Activated naive CD4-positive, alpha-beta T cell treated with anti-CD3 and anti-CD28 coated beads, Interleukin-2, amount 10 ng/mL, durations not matched to agents 7 days and 5 days (primary cell): ENCODE measurements at regions of chr17 and their contacts with region 1.

Region 1: GRCh38 chr17:50547035-50547735 is at the start of gene SPATA20:
- DNase-seq: peak; percentile 93
- H3K4me3 Mint-ChIP-seq: peak within 1 kb of the TSS; percentile 73
- H3K27ac Mint-ChIP-seq: peak within 1 kb of the TSS; percentile 63
- H3K4me1 Mint-ChIP-seq: peaks cover 22% of the 10 kb centered on the region
- H3K27me3 Mint-ChIP-seq: peaks cover 33% of the 10 kb centered on the region

Region 2: GRCh38 chr17:50560185-50560824 is 13.1 kb after region 1 on chr17 and contains the start of gene CACNA1G:
- CTCF ChIA-PET with region 1: interaction called, 13 read pairs
- DNase-seq: peak; percentile 92
- H3K4me3 Mint-ChIP-seq: peak within 1 kb of the TSS; percentile 56
- H3K27ac Mint-ChIP-seq: no peak within 1 kb of the TSS
- H3K4me1 Mint-ChIP-seq: peaks cover 18% of the 10 kb centered on the region
- H3K27me3 Mint-ChIP-seq: peaks cover 94% of the 10 kb centered on the region